Activated B cell treated with CpG ODN at 0.5 μM for 24 hours (primary cell): ENCODE measurements at regions of chr5 and their contacts with region 1.

Region 1: DNA sequence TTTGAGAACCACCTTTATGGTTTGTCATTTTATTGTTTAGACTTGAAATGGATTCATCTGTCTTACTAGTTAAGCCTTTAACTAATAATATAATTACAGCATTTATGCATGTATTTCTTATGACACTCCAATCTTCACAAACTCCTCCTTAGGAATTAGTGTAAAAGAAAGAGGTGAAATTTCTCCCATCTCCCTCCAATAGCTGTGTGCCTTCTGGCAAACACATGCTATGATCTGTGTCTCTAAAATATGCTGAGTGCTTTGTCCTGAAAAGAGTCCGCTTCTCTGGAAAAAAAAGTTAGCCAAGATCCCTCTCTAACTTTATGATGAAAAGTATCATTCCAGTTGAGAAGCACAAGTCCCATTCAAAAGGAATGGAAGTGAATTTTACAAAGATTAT is 13.9 kb upstream of the TENT4A start:
- DNase-seq: no peak
- ATAC-seq: no peak
- H3K4me3 Mint-ChIP-seq: no peak overlapping the region
- H3K27ac Mint-ChIP-seq: no peak overlapping the region
- H3K4me1 Mint-ChIP-seq: no peaks in the 10 kb centered on the region
- H3K27me3 Mint-ChIP-seq: peaks cover 34% of the 10 kb centered on the region
- CTCF ChIP-seq: no peak

Region 2: GRCh38 chr5:6583049-6583880 is 116.1 kb before region 1 on chr5:
- CTCF ChIA-PET with region 1: no interaction called
- POLR2A ChIA-PET with region 1: no interaction called
- intact Hi-C with region 1: no loop called
- DNase-seq: peak; percentile 27
- ATAC-seq: peak; percentile 85
- H3K4me3 Mint-ChIP-seq: no peak overlapping the region
- H3K27ac Mint-ChIP-seq: no peak overlapping the region
- H3K4me1 Mint-ChIP-seq: peaks cover 2% of the 10 kb centered on the region
- H3K27me3 Mint-ChIP-seq: peaks cover 41% of the 10 kb centered on the region
- CTCF ChIP-seq: no peak

Region 3: DNA sequence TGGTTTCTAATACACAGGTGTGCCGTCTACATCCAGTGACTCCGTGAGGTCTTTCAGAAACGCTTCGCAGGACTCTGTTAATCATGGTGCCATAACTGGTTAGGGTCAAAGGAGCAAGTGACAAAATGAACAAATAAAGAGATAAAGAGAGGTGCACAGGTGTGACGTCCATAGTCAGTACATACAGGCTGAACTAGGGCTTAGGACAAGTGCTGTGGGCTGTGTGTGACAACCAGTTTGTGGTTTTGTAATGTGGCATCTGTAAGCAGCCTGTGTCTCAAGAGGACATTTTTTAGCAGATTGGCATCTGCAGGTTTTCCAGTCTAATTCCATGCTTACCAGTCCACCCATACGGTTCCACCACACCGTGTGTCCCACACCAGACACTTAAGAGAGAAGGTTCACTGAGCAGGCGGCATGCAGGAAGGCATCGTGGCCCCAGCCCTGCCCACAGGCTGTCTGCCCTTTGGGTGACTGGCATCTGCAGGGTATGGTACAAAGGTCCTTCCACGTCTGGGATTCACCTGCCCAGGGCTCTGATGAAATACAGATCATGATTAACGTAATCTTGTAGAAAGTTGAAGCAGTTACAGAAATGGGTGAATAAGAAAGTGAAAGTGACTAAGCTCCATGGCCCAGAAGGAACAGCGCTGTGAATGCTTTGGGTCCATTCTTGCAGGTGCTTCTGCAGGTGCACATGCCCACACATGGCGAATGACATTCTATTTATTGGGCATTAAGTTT is 39.2 kb before region 1 on chr5:
- CTCF ChIA-PET with region 1: no interaction called
- POLR2A ChIA-PET with region 1: no interaction called
- intact Hi-C with region 1: loop called (anchors 5 kb)
- DNase-seq: peak; percentile 35
- ATAC-seq: peak; percentile 78
- H3K4me3 Mint-ChIP-seq: peak overlapping the region; percentile 80
- H3K27ac Mint-ChIP-seq: peak overlapping the region; percentile 96
- H3K4me1 Mint-ChIP-seq: peaks cover 31% of the 10 kb centered on the region
- H3K27me3 Mint-ChIP-seq: no peaks in the 10 kb centered on the region
- CTCF ChIP-seq: no peak